ENCODE measurements at regions of chrX and their contacts with region 1.

Region 1: DNA sequence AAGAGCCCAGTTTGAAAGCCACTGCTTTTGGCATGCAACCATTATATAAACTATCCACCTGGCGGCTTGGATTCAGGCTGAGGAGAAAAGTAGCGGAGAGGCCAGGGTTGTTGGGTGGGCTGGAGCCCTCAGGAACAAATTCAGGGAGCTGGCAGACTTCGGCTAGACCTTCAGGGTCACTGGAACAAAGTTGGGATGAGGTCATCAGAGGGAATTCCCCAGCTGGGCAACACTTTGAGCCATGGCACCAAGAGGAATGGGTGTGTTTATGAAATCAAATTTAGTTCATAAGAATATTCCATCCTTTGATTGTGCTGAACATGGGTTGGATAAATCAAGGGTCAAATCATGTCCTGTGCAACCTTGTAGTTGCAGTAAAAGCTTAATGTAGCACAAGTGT is 22.0 kb downstream of the MTMR1 start:
- DNase-seq: no peak
- ATAC-seq: no peak
- H3K4me3 ChIP-seq: no peak overlapping the region
- H3K4me3 Mint-ChIP-seq: no peak overlapping the region
- H3K27ac ChIP-seq: no peak overlapping the region
- H3K27ac Mint-ChIP-seq: peak overlapping the region in 8 of 9 donors; percentile 6 to 80 (median 67)
- H3K4me1 ChIP-seq: peaks cover 0 to 8% of the 10 kb centered on the region in 2 donors
- H3K4me1 Mint-ChIP-seq: peaks cover 16 to 60% (median 28%) of the 10 kb centered on the region in 7 donors
- H3K27me3 ChIP-seq: no peaks in the 10 kb centered on the region
- H3K27me3 Mint-ChIP-seq: no peaks in the 10 kb centered on the region

Region 2: DNA sequence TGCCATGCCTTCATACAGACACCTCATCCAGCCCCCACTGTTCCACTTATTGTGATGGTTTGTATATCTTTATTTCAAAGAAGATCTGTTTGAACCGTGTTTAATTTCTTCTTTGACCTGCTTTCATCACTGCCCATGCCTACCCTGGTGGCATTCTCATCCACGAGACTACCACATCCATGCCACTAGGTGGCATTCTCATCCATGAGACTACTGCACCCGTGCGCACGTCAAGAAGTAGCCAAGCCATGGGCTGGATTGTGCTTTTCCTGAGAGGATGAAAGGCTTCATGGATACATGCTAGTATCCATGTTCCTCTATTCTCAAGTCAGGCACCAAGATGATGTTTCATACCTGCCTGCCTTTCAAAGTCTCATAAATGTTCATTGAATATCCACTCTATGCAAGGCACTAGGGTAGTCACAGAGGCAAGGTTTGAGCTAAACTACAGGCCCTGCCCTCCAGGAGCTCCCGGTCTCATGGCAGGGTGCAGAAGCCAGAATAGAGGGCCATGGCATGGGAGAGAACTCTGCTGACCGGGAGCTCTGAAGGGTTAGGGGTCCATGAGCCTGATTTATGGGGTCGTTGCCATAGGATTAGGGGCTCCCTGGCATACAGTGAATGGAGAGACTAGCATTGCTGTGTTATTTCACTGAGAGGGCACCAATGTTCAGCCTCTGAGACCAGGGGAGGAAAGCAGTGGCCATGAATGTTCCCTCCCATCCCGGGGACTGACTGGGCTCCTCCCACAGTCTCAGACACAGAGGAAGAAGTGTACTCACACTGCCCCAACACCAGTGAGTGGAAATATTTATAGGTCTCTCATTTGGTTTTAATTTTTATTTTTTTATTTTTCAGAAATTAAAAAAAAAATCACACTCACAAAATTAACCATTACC is 752.1 kb before region 1 on chrX:
- CTCF ChIA-PET with region 1: no interaction called
- POLR2A ChIA-PET with region 1: no interaction called
- intact Hi-C with region 1: loop called in 1 of 2 experiments (anchors 5 kb)
- DNase-seq: peak in 3 of 9 donors; percentile 10 to 24 (median 11)
- ATAC-seq: peak; percentile 51
- H3K4me3 ChIP-seq: no peak overlapping the region
- H3K4me3 Mint-ChIP-seq: no peak overlapping the region
- H3K27ac ChIP-seq: no peak overlapping the region
- H3K27ac Mint-ChIP-seq: no peak overlapping the region
- H3K4me1 ChIP-seq: no peaks in the 10 kb centered on the region
- H3K4me1 Mint-ChIP-seq: peaks cover 0 to 4% (median 0%) of the 10 kb centered on the region in 7 donors
- H3K27me3 ChIP-seq: no peaks in the 10 kb centered on the region
- H3K27me3 Mint-ChIP-seq: no peaks in the 10 kb centered on the region

Region 3: DNA sequence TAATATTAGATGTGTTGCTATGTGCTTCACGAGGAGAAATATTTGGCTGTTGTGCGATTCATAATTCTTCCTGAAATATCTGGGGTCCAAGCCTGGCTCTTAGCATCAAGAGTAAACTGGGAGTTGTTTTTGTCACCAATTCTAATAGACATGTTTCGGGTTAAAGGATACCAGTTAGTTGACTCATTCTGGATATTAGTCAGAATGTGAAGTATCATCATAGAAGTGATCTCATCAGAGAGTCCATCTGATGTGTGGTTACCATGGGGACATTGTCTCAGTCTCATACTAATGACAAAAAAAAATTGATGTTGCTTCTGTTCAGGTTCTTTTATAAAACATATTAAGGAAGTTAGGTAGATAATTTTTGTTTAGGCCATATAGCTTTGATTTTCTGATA is 79.2 kb before region 1 on chrX:
- CTCF ChIA-PET with region 1: no interaction called
- POLR2A ChIA-PET with region 1: no interaction called
- intact Hi-C with region 1: loop called in 1 of 2 experiments (anchors 10 kb)
- DNase-seq: no peak
- ATAC-seq: no peak
- H3K4me3 ChIP-seq: no peak overlapping the region
- H3K4me3 Mint-ChIP-seq: no peak overlapping the region
- H3K27ac ChIP-seq: no peak overlapping the region
- H3K27ac Mint-ChIP-seq: peak overlapping the region in 1 of 9 donors; percentile 21
- H3K4me1 ChIP-seq: no peaks in the 10 kb centered on the region
- H3K4me1 Mint-ChIP-seq: peaks cover 0 to 8% (median 0%) of the 10 kb centered on the region in 7 donors
- H3K27me3 ChIP-seq: no peaks in the 10 kb centered on the region
- H3K27me3 Mint-ChIP-seq: no peaks in the 10 kb centered on the region

Region 4: DNA sequence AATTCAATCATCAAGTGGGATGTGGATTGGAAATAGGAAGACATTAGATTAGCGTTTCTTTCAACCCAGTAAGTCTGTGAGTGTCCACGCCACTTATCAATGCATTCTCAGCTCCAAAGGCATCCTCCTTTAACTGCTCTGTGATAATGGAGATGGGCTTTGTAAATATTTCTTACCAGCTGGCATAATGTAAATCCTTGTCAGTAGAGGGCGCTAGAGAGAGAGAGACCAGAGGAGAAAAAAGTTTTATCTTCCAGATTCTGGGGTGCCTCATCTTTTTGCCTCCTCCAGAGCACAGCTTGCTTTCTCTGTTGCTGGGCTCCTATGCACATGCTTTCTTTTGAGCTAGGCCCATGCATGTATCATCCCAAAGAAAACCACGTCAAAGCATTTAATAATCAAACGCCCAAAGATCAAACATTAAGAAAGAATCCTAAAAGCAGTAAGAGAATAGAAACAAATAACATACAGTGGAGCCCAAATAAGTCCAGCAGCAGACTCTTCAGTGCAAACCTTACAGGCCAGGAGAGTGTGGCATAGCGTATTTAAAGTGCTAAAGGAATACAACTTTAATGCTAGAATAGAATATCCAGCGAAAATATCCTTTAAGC is 31.5 kb before region 1 on chrX:
- CTCF ChIA-PET with region 1: interaction called, 18 read pairs
- POLR2A ChIA-PET with region 1: interaction called, 4 read pairs
- intact Hi-C with region 1: loop called (anchors 1 kb)
- DNase-seq: peak in 7 of 9 donors; percentile 36 to 68 (median 60)
- ATAC-seq: peak; percentile 72
- H3K4me3 ChIP-seq: no peak overlapping the region
- H3K4me3 Mint-ChIP-seq: no peak overlapping the region
- H3K27ac ChIP-seq: no peak overlapping the region
- H3K27ac Mint-ChIP-seq: peak overlapping the region in 2 of 9 donors; percentile 32 to 42
- H3K4me1 ChIP-seq: peaks cover 0 to 6% of the 10 kb centered on the region in 2 donors
- H3K4me1 Mint-ChIP-seq: peaks cover 8 to 32% (median 12%) of the 10 kb centered on the region in 7 donors
- H3K27me3 ChIP-seq: no peaks in the 10 kb centered on the region
- H3K27me3 Mint-ChIP-seq: no peaks in the 10 kb centered on the region